ENCODE measurements at regions of chr15 and their contacts with region 1.

Region 1: DNA sequence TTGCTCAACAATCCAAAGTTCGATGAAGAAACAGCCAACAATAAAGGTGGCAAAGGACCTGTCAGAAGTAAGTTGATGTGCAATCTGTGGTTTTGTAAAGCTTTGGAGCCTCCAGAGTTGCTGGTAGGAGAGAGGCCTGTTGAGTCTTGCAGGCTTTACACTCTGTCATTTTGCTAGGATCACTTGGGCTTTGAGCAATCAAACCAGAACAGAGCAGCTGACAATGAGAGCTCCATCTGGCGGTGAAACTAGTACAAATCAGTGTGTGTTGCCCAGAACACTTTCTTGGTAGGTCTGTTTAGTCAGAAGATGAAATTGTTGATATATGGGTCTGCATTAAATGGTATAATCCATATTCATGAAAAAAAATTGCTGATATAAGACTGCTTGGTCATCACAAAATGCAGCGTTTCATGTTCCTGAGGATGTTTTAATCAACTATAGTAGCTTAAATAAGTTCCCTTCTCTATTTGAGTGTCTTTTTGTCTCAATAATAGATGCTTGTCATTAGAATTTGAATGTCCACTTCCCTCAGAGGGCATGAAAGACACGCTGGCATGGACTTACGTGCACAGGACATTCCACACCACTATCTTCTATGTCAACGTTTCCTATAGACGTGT is 25.7 kb downstream of the TMOD2 start:
- DNase-seq: peak in 4 of 5 donors; percentile 50 to 67 (median 60)
- ATAC-seq: peak; percentile 61 to 95 (median 90)
- H3K4me3 ChIP-seq: no peak overlapping the region
- H3K27ac ChIP-seq: no peak overlapping the region
- H3K4me1 ChIP-seq: peaks cover 0 to 7% (median 0%) of the 10 kb centered on the region in 12 donors
- H3K27me3 ChIP-seq: no peaks in the 10 kb centered on the region
- CTCF ChIP-seq: peak; percentile 68 to 85 (median 73)
- POLR2A ChIP-seq: no peak

Region 2: GRCh38 chr15:51649659-51650521 is 127.2 kb before region 1 on chr15:
- intact Hi-C with region 1: loop called (anchors 1 to 2 kb)
- DNase-seq: peak in 2 of 5 donors; percentile 24 to 29
- ATAC-seq: peak; percentile 69 to 83 (median 76)
- H3K4me3 ChIP-seq: no peak overlapping the region
- H3K27ac ChIP-seq: no peak overlapping the region
- H3K4me1 ChIP-seq: peaks cover 0 to 13% (median 0%) of the 10 kb centered on the region in 12 donors
- H3K27me3 ChIP-seq: no peaks in the 10 kb centered on the region
- CTCF ChIP-seq: peak; percentile 55 to 84 (median 77)
- POLR2A ChIP-seq: no peak

Region 3: DNA sequence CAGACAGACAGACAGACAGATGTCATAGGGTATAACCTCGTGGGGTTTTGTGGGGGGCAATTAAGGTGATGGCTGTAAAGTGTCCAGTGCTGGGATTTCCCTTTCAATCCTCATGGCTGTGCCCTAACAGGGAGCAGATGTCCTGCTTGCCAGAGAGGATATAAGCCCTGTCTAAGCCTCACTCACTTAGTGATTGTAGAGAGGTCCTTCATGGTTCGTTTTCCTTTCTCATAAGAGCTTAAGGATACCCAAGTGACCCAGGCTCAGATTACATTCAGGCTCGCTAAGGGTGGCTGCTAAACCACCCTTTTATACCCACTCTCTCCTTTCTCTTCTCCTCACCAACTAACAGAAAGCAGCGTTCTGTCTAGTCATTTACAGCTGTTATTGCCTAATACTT is 58.8 kb before region 1 on chr15:
- intact Hi-C with region 1: loop called in 1 of 10 experiments (anchors 10 kb)
- DNase-seq: no peak
- ATAC-seq: no peak
- H3K4me3 ChIP-seq: no peak overlapping the region
- H3K27ac ChIP-seq: no peak overlapping the region
- H3K4me1 ChIP-seq: peaks cover 0 to 14% (median 5%) of the 10 kb centered on the region in 12 donors
- H3K27me3 ChIP-seq: no peaks in the 10 kb centered on the region
- CTCF ChIP-seq: no peak
- POLR2A ChIP-seq: no peak

Region 4: DNA sequence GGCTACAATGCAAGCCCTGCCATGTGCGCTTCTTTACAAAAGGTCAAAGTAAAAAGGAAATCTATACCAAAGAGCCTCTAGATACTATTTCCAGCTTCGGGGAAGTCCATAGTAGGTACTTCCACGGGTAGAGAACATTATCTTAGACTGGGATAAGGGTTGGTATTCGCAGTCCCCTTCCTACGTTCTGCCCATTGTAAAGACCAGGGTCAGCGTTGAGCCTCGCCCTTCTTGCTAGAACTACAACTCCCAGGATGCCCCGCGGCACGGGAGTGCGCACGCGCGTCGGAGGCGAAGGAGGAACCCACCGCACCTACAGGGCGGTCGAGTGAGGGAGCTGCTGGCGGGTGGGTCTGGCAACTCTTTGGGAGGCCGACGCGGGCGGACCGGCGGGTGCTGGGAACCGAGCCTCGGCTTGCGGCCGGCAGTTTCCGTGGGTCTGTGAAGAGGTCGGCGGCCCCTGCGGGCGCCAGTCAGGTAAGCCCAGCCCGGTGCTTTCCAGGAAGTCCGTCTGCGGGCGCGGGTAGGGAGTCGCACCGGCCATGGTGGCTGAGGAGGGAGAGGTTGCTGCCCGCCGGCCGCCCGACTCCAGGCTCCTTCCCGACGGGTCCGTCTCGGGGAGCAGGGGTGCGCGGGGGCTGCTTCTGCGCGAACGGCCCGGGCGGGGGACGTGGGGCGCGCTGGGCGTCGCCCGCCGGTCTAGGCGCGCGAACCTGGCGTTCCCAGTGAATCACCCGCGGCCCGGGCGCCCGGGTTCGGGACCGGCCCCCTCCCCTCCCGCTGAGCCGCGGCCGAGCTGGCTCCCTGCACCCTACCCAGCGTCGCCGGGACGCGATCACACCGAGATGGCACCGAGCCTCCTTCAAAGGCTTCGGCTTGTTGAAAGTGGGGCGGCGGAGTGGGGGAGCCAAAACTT is 52.6 kb after region 1 on chr15 and contains the start of gene TMOD3:
- intact Hi-C with region 1: no loop called
- DNase-seq: peak; percentile 92 to 97 (median 94)
- ATAC-seq: peak; percentile 97 to 98 (median 98)
- H3K4me3 ChIP-seq: peak within 1 kb of the TSS; percentile 74 to 99 (median 90)
- H3K27ac ChIP-seq: peak within 1 kb of the TSS; percentile 83 to 98 (median 93)
- H3K4me1 ChIP-seq: peaks cover 6 to 47% (median 25%) of the 10 kb centered on the region in 12 donors
- H3K27me3 ChIP-seq: no peaks in the 10 kb centered on the region
- CTCF ChIP-seq: peak in 1 of 12 donors; percentile 30
- POLR2A ChIP-seq: peak in 1 of 2 donors; percentile 93
- total RNA-seq, gene TMOD3: 12.1 to 34.8 (median 21.4) TPM

Measured in heart left ventricle (tissue), 16 donors.